ENCODE measurements at regions of chr20 and their contacts with region 1.

Region 1: DNA sequence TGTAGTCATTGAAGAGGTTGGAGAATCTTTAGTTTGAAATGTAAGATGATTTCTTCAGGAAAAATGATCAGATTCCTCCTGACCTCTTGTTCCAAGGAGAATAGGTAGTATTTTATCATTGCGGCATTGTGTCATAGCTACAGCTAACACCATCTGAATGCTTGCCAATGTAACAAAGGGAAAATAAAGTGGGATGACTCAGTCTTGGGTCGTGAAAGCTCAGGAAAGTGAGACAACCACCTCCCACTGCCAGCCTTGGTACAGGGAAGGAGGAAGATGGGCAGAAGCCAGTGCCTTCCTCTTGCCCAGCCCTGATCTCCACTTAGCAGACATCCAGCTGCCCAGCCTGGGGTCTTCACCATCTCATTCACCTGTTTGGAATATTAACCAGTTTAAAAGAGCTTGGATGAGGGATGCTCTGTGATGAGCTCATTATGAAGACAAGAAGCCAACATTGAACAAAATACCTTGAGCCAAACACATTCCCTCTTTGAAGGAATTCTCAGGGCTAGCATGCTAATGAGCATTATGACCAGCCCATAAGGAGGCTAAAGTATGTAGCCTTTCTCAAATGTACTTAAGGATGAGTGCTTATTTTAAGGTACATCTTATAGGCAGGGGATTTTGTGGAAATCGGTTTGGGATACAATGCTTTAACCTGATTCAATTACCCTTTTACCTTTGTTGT is 40.0 kb upstream of the APCDD1L start:
- DNase-seq: no peak
- H3K4me3 ChIP-seq: no peak overlapping the region
- H3K27ac ChIP-seq: no peak overlapping the region
- H3K4me1 ChIP-seq: peaks cover 14% of the 10 kb centered on the region
- H3K27me3 ChIP-seq: no peaks in the 10 kb centered on the region
- CTCF ChIP-seq: no peak
- POLR2A ChIP-seq: no peak

Region 2: GRCh38 chr20:58349586-58349985 is 205.6 kb before region 1 on chr20:
- intact Hi-C with region 1: no loop called
- DNase-seq: no peak
- H3K4me3 ChIP-seq: no peak overlapping the region
- H3K27ac ChIP-seq: no peak overlapping the region
- H3K4me1 ChIP-seq: no peaks in the 10 kb centered on the region
- H3K27me3 ChIP-seq: no peaks in the 10 kb centered on the region
- CTCF ChIP-seq: no peak
- POLR2A ChIP-seq: no peak

Region 3: GRCh38 chr20:58498470-58499068 is 56.7 kb before region 1 on chr20:
- intact Hi-C with region 1: loop called (anchors 10 kb)
- DNase-seq: no peak
- H3K4me3 ChIP-seq: no peak overlapping the region
- H3K27ac ChIP-seq: no peak overlapping the region
- H3K4me1 ChIP-seq: no peaks in the 10 kb centered on the region
- H3K27me3 ChIP-seq: no peaks in the 10 kb centered on the region
- CTCF ChIP-seq: no peak
- POLR2A ChIP-seq: no peak

Measured in vagina (tissue), 2 donors.